CD8-positive, alpha-beta memory T cell (primary cell): ENCODE measurements at regions of chr12 and their contacts with region 1.

Region 1: GRCh38 chr12:21438643-21439042 is 1.2 kb downstream of the PYROXD1 start:
- DNase-seq: no peak
- H3K4me3 ChIP-seq: peak overlapping the region; percentile 94
- H3K4me3 Mint-ChIP-seq: peak overlapping the region; percentile 98 to 99 (median 98)
- H3K27ac ChIP-seq: peak overlapping the region; percentile 94
- H3K27ac Mint-ChIP-seq: peak overlapping the region; percentile 96 to 99 (median 98)
- H3K4me1 ChIP-seq: peaks cover 42% of the 10 kb centered on the region
- H3K4me1 Mint-ChIP-seq: peaks cover 50 to 67% (median 65%) of the 10 kb centered on the region in 3 donors
- H3K27me3 ChIP-seq: no peaks in the 10 kb centered on the region
- H3K27me3 Mint-ChIP-seq: no peaks in the 10 kb centered on the region

Region 2: GRCh38 chr12:21501379-21501956 is 62.8 kb after region 1 on chr12 and contains the starts of genes GOLT1B and RECQL:
- CTCF ChIA-PET with region 1: no interaction called
- POLR2A ChIA-PET with region 1: interaction called, 15 read pairs
- DNase-seq: peak; percentile 78 to 94 (median 93)
- H3K4me3 ChIP-seq: peak within 1 kb of the TSS; percentile 92
- H3K4me3 Mint-ChIP-seq: no peak within 1 kb of the TSS
- H3K27ac ChIP-seq: peak within 1 kb of the TSS; percentile 80
- H3K27ac Mint-ChIP-seq: peak within 1 kb of the TSS in 1 of 8 donors; percentile 70
- H3K4me1 ChIP-seq: peaks cover 56% of the 10 kb centered on the region
- H3K4me1 Mint-ChIP-seq: peaks cover 44 to 70% (median 45%) of the 10 kb centered on the region in 3 donors
- H3K27me3 ChIP-seq: no peaks in the 10 kb centered on the region
- H3K27me3 Mint-ChIP-seq: no peaks in the 10 kb centered on the region
- total RNA-seq, gene GOLT1B: 48.1 to 52.3 TPM
- total RNA-seq, gene RECQL: 95.1 to 101 TPM

Region 3: DNA sequence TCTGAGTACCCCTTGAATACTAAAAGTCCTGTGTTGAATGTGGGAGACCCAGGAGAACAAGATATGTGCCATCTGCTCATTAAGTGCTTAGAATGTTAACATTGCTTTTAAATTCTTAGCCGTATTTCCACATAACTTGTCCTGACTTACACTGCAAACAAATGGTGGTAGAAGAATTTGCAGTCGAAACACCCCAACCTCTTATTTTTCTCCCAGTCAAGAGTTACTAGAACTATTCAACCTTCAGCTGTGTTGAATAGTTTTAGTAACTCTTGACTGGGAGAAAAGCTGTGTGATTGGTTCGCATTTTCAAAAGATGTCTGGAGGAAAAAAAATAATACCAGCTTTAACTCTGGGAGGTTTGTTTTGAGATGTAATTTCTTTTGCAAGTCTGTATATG is 79.8 kb after region 1 on chr12:
- CTCF ChIA-PET with region 1: no interaction called
- POLR2A ChIA-PET with region 1: no interaction called
- DNase-seq: no peak
- H3K4me3 ChIP-seq: no peak overlapping the region
- H3K4me3 Mint-ChIP-seq: no peak overlapping the region
- H3K27ac ChIP-seq: no peak overlapping the region
- H3K27ac Mint-ChIP-seq: peak overlapping the region in 1 of 8 donors; percentile 11
- H3K4me1 ChIP-seq: no peaks in the 10 kb centered on the region
- H3K4me1 Mint-ChIP-seq: no peaks in the 10 kb centered on the region
- H3K27me3 ChIP-seq: no peaks in the 10 kb centered on the region
- H3K27me3 Mint-ChIP-seq: no peaks in the 10 kb centered on the region

Region 4: DNA sequence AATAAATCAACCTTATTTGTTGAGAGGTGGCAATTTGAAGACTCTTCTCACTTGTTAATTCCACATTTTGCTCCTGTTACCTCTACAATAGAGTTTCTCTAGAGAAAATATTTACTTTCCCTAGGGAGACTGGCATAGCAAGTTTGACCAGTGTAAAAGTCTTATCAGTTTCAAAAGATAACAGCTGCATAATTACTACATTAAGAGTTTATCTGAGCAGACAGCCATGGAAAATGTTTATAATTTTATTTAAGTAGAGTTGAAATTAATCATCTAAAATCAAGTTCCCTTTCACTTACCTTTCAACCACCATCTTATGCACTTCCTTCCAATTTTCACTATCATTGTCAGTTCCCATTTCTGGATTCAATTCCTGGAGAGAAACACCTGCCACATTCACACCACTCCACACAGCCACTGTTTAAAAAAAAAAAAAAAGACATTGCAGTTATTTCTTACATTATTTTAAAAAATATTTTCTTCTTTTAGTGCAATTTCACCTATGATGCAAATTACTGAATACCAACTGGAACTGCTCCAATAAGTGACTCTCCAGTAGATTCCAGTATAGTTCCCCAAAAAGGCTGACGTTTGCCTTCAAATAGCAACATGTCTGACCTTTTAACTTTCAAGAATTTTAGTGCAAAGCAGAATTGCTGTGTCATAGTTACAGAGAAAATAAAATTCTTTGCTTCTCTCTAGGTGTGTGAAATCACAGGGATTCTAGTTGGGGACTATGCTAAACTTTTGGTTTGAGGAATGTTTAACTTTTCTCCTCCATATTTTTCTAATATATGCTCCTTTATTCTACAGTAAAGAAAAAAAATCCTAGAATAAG is 199.6 kb after region 1 on chr12:
- CTCF ChIA-PET with region 1: no interaction called
- POLR2A ChIA-PET with region 1: interaction called, 14 read pairs
- DNase-seq: no peak
- H3K4me3 ChIP-seq: no peak overlapping the region
- H3K4me3 Mint-ChIP-seq: no peak overlapping the region
- H3K27ac ChIP-seq: no peak overlapping the region
- H3K27ac Mint-ChIP-seq: peak overlapping the region in 6 of 8 donors; percentile 14 to 83 (median 50)
- H3K4me1 ChIP-seq: peaks cover 42% of the 10 kb centered on the region
- H3K4me1 Mint-ChIP-seq: peaks cover 35 to 58% (median 57%) of the 10 kb centered on the region in 3 donors
- H3K27me3 ChIP-seq: no peaks in the 10 kb centered on the region
- H3K27me3 Mint-ChIP-seq: no peaks in the 10 kb centered on the region

Region 5: GRCh38 chr12:21657326-21658077 is 218.9 kb after region 1 on chr12 and contains the start of gene LDHB:
- CTCF ChIA-PET with region 1: no interaction called
- POLR2A ChIA-PET with region 1: interaction called, 10 read pairs
- DNase-seq: peak; percentile 85 to 95 (median 87)
- H3K4me3 ChIP-seq: peak within 1 kb of the TSS; percentile 91
- H3K4me3 Mint-ChIP-seq: peak within 1 kb of the TSS; percentile 92 to 99 (median 96)
- H3K27ac ChIP-seq: peak within 1 kb of the TSS; percentile 78
- H3K27ac Mint-ChIP-seq: peak within 1 kb of the TSS; percentile 90 to 99 (median 96)
- H3K4me1 ChIP-seq: peaks cover 39% of the 10 kb centered on the region
- H3K4me1 Mint-ChIP-seq: peaks cover 54 to 68% (median 60%) of the 10 kb centered on the region in 3 donors
- H3K27me3 ChIP-seq: no peaks in the 10 kb centered on the region
- H3K27me3 Mint-ChIP-seq: no peaks in the 10 kb centered on the region
- total RNA-seq, gene LDHB: 1,700 to 1,721 TPM